Heart right ventricle (tissue), 16 donors: ENCODE measurements at regions of chr10 and their contacts with region 1.

Region 1: GRCh38 chr10:8053446-8054290 is 820 bp upstream of the GATA3 start:
- DNase-seq: peak; percentile 83 to 87
- ATAC-seq: peak; percentile 83 to 92 (median 90)
- H3K4me3 ChIP-seq: peak overlapping the region; percentile 30 to 68 (median 60)
- H3K27ac ChIP-seq: peak overlapping the region in 9 of 10 donors; percentile 45 to 89 (median 75)
- H3K4me1 ChIP-seq: peaks cover 8 to 77% (median 57%) of the 10 kb centered on the region in 9 donors
- H3K27me3 ChIP-seq: peaks cover 29 to 100% (median 94%) of the 10 kb centered on the region in 7 donors
- CTCF ChIP-seq: peak in 8 of 9 donors; percentile 72 to 88 (median 79)

Region 2: DNA sequence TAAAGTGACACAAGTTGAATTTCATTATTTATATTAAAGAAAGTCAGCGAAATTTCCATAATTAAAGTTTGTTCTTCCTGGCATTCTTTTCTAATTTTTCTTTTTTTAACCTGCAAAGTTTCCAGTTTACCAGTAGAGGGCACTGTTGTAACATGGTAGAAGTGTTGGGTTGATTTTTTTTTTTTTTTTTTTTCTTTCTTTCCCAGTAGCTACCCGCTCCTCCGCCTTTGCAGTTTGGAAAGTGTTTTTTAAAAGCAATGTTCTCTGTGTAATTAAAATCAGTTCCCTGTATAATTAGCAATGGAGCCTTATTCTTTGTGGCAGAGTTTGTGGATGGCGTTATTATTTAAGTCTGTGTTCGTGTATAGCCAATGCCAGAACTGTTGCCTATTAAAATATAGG is 181.6 kb before region 1 on chr10:
- intact Hi-C with region 1: loop called in 1 of 10 experiments (anchors 10 kb)
- DNase-seq: no peak
- ATAC-seq: no peak
- H3K4me3 ChIP-seq: peak overlapping the region in 8 of 10 donors; percentile 7 to 45 (median 36)
- H3K27ac ChIP-seq: no peak overlapping the region
- H3K4me1 ChIP-seq: peaks cover 0 to 5% (median 0%) of the 10 kb centered on the region in 9 donors
- H3K27me3 ChIP-seq: no peaks in the 10 kb centered on the region
- CTCF ChIP-seq: peak; percentile 72 to 89 (median 79)

Region 3: DNA sequence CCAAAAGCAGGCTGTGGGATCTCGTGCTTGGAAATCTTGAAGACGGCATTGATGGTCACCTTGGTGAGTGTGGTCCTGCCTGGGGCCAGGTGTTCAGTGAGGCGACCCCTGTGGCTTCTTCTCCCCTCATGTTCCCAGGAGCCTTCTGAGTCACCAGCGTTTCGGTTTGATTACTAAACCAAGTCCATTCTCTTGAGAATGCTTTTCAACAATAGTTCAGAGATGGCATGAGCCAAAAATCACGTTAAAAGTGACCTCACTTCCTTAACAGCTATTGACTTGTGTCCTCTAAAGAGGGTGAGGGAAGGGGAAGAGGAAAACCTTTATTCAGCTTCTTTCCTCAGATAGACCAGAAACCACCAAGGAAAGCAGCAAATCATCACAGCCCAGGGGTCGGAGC is 316.0 kb after region 1 on chr10:
- intact Hi-C with region 1: loop called in 3 of 10 experiments (anchors 10 kb)
- DNase-seq: peak in 1 of 2 donors; percentile 40
- ATAC-seq: peak in 7 of 8 donors; percentile 65 to 91 (median 84)
- H3K4me3 ChIP-seq: no peak overlapping the region
- H3K27ac ChIP-seq: peak overlapping the region; percentile 31 to 85 (median 72)
- H3K4me1 ChIP-seq: peaks cover 0 to 21% (median 0%) of the 10 kb centered on the region in 9 donors
- H3K27me3 ChIP-seq: no peaks in the 10 kb centered on the region
- CTCF ChIP-seq: no peak

Region 4: GRCh38 chr10:8453587-8453986 is 399.9 kb after region 1 on chr10:
- intact Hi-C with region 1: loop called in 3 of 10 experiments (anchors 10 kb)
- DNase-seq: peak; percentile 5 to 37
- ATAC-seq: peak; percentile 37 to 88 (median 70)
- H3K4me3 ChIP-seq: no peak overlapping the region
- H3K27ac ChIP-seq: peak overlapping the region in 1 of 10 donors; percentile 9
- H3K4me1 ChIP-seq: peaks cover 0 to 4% (median 0%) of the 10 kb centered on the region in 9 donors
- H3K27me3 ChIP-seq: no peaks in the 10 kb centered on the region
- CTCF ChIP-seq: no peak